ENCODE measurements at regions of chr11 and their contacts with region 1.

Region 1: GRCh38 chr11:6505577-6506240 is 8.6 kb downstream of the DNHD1 start:
- DNase-seq: peak; percentile 42
- CTCF ChIP-seq: peak; percentile 77

Region 2: DNA sequence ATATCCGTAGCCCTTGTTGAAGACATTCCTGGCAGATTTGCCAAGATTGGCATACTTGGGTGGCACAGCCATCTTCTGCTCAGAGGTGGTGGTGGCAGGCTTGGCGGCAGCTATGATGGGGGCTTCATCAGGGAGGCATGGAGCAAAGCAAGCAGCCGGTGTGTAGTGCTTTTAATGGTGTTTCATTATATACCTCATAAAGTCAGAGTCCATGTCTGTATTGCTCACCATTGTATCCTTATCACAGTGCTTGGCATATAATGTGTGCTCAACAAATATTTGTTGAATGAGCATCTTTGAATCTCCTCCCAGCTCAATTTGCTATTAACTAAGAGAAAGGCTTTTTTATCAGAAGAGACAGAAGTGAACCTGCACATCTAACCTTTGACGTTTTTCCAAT is 16.4 kb before region 1 on chr11:
- CTCF ChIA-PET with region 1: interaction called, 31 read pairs
- POLR2A ChIA-PET with region 1: no interaction called
- DNase-seq: no peak
- CTCF ChIP-seq: no peak

Region 3: DNA sequence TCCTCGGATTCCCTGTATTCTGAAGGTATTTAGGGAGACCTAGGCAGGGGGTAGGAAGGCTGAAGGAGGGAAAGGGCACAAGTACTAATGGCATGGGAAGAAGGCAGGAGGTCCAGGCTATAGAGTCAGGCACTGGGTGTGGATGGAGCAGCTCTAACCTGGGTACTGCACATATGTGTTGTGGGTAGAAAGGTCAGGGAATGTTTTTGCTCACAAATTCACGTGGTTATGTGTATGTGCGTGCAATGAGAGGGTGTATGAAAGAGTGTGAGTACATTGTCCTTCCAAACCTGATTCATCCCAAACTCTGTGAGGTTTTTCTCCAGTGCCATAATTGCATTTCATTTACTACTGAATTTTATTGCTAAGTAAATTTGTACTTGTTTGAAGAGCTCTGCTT is 14.6 kb after region 1 on chr11:
- CTCF ChIA-PET with region 1: interaction called, 22 read pairs
- POLR2A ChIA-PET with region 1: no interaction called
- DNase-seq: no peak
- CTCF ChIP-seq: no peak

Measured in GM10248 (cell line).